T-cell (primary cell): ENCODE measurements at regions of chr7 and their contacts with region 1.

Region 1: GRCh38 chr7:104914421-104914820 is 99.6 kb upstream of the KMT2E start:
- DNase-seq: no peak
- ATAC-seq: no peak
- H3K4me3 ChIP-seq: no peak overlapping the region
- H3K4me3 Mint-ChIP-seq: no peak overlapping the region
- H3K27ac ChIP-seq: no peak overlapping the region
- H3K27ac Mint-ChIP-seq: no peak overlapping the region
- H3K4me1 ChIP-seq: no peaks in the 10 kb centered on the region
- H3K4me1 Mint-ChIP-seq: peaks cover 0 to 4% (median 2%) of the 10 kb centered on the region in 3 donors
- H3K27me3 ChIP-seq: peaks cover 0 to 13% of the 10 kb centered on the region in 2 experiments
- H3K27me3 Mint-ChIP-seq: peaks cover 3 to 7% of the 10 kb centered on the region in 2 donors

Region 2: DNA sequence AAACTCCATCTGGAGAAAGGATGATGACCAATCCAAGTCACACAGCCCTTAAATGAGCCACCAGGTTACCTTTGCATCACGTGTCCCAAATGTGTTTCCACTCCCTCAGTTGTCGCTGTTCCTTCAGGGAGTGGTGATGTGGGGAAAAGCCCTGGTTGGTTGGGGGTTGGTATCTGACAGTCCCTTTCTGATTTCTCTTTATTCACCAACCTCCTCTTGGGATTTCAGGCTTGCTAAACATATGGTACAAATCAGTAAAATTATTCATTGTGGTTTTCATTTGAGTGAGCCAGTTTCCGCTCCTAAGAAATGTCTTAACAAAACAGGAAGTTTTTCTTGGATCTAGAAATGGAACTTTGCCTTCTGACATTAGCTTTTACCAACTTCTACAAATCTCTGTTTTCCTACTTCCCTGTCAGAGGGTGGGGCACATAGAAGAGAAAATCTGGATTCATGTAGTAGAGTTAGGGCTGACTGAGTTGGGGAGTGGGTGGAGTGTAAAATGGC is 59.5 kb after region 1 on chr7:
- CTCF ChIA-PET with region 1: interaction called in 1 of 2 experiments, 17 read pairs
- POLR2A ChIA-PET with region 1: no interaction called
- DNase-seq: no peak
- ATAC-seq: no peak
- H3K4me3 ChIP-seq: no peak overlapping the region
- H3K4me3 Mint-ChIP-seq: no peak overlapping the region
- H3K27ac ChIP-seq: no peak overlapping the region
- H3K27ac Mint-ChIP-seq: no peak overlapping the region
- H3K4me1 ChIP-seq: no peaks in the 10 kb centered on the region
- H3K4me1 Mint-ChIP-seq: peaks cover 0 to 9% (median 3%) of the 10 kb centered on the region in 3 donors
- H3K27me3 ChIP-seq: no peaks in the 10 kb centered on the region
- H3K27me3 Mint-ChIP-seq: no peaks in the 10 kb centered on the region

Region 3: DNA sequence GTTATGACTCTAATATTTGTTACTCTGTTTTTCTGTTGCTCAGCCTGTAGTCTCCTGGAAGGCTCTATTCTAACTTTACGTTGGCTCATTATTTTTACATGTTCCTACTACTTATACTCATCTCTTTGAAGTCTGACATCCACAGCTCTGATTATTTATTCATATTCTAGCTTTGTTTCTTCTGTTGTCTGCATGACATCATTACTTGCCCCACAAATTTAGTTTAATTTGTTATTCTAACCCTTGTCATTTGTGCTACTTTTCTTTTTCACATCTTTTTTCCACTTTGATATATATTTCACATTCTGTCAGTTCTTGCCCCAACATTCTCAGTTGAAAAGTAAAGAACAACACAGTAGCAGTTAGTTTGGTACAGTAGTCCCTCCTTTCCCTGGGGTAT is 150.7 kb after region 1 on chr7:
- CTCF ChIA-PET with region 1: no interaction called
- POLR2A ChIA-PET with region 1: no interaction called
- DNase-seq: no peak
- ATAC-seq: no peak
- H3K4me3 ChIP-seq: no peak overlapping the region
- H3K4me3 Mint-ChIP-seq: no peak overlapping the region
- H3K27ac ChIP-seq: no peak overlapping the region
- H3K27ac Mint-ChIP-seq: peak overlapping the region; percentile 3 to 70
- H3K4me1 ChIP-seq: peaks cover 0 to under 1% of the 10 kb centered on the region in 2 experiments
- H3K4me1 Mint-ChIP-seq: peaks cover 49 to 60% (median 55%) of the 10 kb centered on the region in 3 donors
- H3K27me3 ChIP-seq: no peaks in the 10 kb centered on the region
- H3K27me3 Mint-ChIP-seq: no peaks in the 10 kb centered on the region